Posterior cingulate gyrus (tissue), 11 donors: ENCODE measurements at regions of chr3 and their contacts with region 1.

Region 1: GRCh38 chr3:114418724-114419543 is 125.1 kb downstream of the TIGIT start:
- DNase-seq: no peak

Region 2: DNA sequence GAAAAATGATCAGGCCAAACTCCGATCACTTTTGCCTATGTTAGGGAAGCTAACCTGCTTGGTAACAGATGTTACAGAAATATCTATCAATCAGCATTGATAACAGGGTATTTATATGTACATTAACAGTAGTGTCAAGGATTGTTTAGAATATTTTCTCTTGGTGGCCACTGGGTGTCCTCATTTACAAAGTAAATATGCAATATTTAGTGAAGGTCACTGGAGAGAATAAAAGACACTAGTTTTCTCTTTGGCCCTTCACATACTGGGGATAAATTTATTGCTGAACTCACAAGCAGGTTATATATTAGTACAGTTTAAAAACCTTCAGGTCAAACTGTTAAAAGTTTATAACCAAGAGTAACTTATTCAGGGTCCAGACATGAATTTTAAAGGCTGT is 56.1 kb before region 1 on chr3:
- intact Hi-C with region 1: loop called (anchors 10 kb)
- DNase-seq: no peak

Region 3: DNA sequence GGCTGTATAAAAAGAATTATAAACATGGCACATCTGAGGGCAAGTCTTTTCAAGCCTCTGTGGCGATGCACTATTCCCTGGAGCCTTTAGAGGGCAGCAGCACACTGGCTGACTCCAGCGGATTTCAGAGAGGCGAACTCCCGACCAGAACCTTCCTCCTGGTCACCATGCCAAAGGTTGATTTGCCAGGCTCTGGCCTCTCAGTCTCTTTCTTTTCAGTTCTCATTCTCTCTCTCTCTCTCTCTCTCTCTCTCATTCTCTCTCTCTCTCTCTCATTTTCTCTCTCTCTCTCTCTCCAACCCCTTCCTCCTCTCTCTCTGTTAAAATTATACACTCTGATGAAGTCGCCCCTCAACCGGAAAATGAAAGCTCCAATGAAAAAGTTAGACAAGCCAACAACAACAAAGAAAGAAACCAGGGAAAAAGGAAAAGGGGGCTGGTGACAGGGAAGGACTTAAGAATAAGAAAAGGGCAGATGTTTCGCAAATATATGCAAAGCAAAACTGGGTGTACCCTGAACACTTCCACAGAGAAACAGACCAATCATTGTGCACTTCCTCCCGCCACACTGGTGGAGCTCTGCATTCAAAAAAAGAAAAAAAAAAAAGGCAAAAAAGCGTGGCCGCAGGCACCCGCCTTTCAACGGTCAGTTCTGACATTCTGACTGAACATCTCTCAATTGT is 34.9 kb before region 1 on chr3:
- intact Hi-C with region 1: loop called (anchors 5 kb)
- DNase-seq: peak; percentile 78 to 98 (median 88)

Region 4: GRCh38 chr3:114454551-114455251 is 35.8 kb after region 1 on chr3:
- intact Hi-C with region 1: loop called (anchors 5 kb)
- DNase-seq: peak in 2 of 10 donors; percentile 41 to 84